Activated CD4-positive, alpha-beta memory T cell treated with anti-CD3 and anti-CD28 coated beads for 36 hours (primary cell): ENCODE measurements at regions of chr3 and their contacts with region 1.

Region 1: DNA sequence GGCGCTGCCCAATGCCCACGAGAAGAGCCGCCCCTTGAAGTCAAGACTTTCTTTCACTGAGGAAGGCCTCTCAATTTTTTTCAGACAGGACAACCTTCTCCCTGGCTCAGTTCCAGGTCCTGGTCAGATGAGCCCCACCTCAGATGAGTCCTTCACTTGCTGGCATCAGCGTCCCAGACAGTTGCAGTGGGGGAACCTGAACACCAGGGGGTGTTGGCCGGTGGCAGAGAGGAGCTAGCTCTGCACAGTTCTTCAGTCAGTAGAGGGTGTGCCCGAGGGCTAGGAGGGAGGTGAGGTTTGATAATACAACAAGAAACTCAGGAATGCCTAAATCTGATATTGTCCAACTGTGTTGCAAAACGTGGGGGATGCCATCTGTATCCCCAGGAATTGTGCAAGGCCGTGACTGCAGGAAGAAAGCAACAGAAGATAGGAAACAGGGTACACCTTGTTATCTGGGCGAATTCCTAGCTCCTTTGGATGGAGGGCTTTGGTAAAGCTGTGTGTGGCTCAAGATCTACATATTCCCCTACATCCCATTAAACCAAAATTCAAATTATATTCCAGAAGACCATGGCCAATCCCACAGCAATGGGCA is 34.3 kb downstream of the CCR3 start:
- DNase-seq: peak; percentile 87
- H3K4me3 Mint-ChIP-seq: no peak overlapping the region
- H3K27ac Mint-ChIP-seq: no peak overlapping the region
- H3K4me1 Mint-ChIP-seq: peaks cover 43% of the 10 kb centered on the region
- H3K27me3 Mint-ChIP-seq: peaks cover 28% of the 10 kb centered on the region

Region 2: GRCh38 chr3:44624749-44625480 is 1651.7 kb before region 1 on chr3 and contains the start of gene ZNF197:
- CTCF ChIA-PET with region 1: no interaction called
- POLR2A ChIA-PET with region 1: no interaction called
- intact Hi-C with region 1: no loop called
- DNase-seq: peak; percentile 78
- H3K4me3 Mint-ChIP-seq: peak within 1 kb of the TSS; percentile 80
- H3K27ac Mint-ChIP-seq: peak within 1 kb of the TSS; percentile 47
- H3K4me1 Mint-ChIP-seq: peaks cover 20% of the 10 kb centered on the region
- H3K27me3 Mint-ChIP-seq: no peaks in the 10 kb centered on the region
- total RNA-seq, gene ZNF197: 9.1 to 9.9 TPM

Region 3: DNA sequence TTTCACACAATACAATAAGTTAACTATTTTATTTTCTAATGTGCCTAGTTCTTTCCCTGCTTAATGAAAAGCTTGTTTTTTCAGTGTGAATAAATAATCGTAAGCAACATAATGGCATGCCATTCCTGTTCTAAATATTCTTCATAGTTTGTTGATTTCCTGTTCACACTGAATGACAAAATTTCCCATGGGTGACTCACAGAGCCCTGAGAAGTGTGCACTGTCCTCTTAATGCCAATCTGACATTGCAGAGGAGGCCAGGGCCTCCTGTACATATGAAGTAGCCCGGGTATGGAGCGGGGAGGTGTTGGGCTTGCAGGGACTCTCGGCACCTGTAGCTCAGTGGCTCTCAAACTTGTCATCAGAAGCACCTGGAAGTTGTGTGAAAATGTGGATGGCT is 10.0 kb before region 1 on chr3:
- CTCF ChIA-PET with region 1: interaction called, 16 read pairs
- POLR2A ChIA-PET with region 1: interaction called, 6 read pairs
- intact Hi-C with region 1: loop called (anchors 2 kb)
- DNase-seq: no peak
- H3K4me3 Mint-ChIP-seq: no peak overlapping the region
- H3K27ac Mint-ChIP-seq: no peak overlapping the region
- H3K4me1 Mint-ChIP-seq: peaks cover 27% of the 10 kb centered on the region
- H3K27me3 Mint-ChIP-seq: peaks cover 18% of the 10 kb centered on the region

Region 4: GRCh38 chr3:46349485-46350261 is 73.1 kb after region 1 on chr3:
- CTCF ChIA-PET with region 1: interaction called, 16 read pairs
- POLR2A ChIA-PET with region 1: no interaction called
- intact Hi-C with region 1: no loop called
- DNase-seq: no peak
- H3K4me3 Mint-ChIP-seq: no peak overlapping the region
- H3K27ac Mint-ChIP-seq: peak overlapping the region; percentile 73
- H3K4me1 Mint-ChIP-seq: peaks cover 58% of the 10 kb centered on the region
- H3K27me3 Mint-ChIP-seq: peaks cover 17% of the 10 kb centered on the region

Region 5: GRCh38 chr3:46359733-46360493 is 83.3 kb after region 1 on chr3:
- CTCF ChIA-PET with region 1: interaction called, 16 read pairs
- POLR2A ChIA-PET with region 1: interaction called, 3 read pairs
- intact Hi-C with region 1: loop called (anchors 2 kb)
- DNase-seq: peak; percentile 67
- H3K4me3 Mint-ChIP-seq: peak overlapping the region; percentile 10
- H3K27ac Mint-ChIP-seq: peak overlapping the region; percentile 60
- H3K4me1 Mint-ChIP-seq: peaks cover 71% of the 10 kb centered on the region
- H3K27me3 Mint-ChIP-seq: peaks cover 20% of the 10 kb centered on the region

Region 6: GRCh38 chr3:46378426-46378942 is 101.9 kb after region 1 on chr3:
- CTCF ChIA-PET with region 1: interaction called, 50 read pairs
- POLR2A ChIA-PET with region 1: no interaction called
- intact Hi-C with region 1: no loop called
- DNase-seq: peak; percentile 79
- H3K4me3 Mint-ChIP-seq: no peak overlapping the region
- H3K27ac Mint-ChIP-seq: no peak overlapping the region
- H3K4me1 Mint-ChIP-seq: peaks cover 36% of the 10 kb centered on the region
- H3K27me3 Mint-ChIP-seq: peaks cover 13% of the 10 kb centered on the region